Endothelial cell of umbilical vein (primary cell): ENCODE measurements at regions of chr4 and their contacts with region 1.

Region 1: DNA sequence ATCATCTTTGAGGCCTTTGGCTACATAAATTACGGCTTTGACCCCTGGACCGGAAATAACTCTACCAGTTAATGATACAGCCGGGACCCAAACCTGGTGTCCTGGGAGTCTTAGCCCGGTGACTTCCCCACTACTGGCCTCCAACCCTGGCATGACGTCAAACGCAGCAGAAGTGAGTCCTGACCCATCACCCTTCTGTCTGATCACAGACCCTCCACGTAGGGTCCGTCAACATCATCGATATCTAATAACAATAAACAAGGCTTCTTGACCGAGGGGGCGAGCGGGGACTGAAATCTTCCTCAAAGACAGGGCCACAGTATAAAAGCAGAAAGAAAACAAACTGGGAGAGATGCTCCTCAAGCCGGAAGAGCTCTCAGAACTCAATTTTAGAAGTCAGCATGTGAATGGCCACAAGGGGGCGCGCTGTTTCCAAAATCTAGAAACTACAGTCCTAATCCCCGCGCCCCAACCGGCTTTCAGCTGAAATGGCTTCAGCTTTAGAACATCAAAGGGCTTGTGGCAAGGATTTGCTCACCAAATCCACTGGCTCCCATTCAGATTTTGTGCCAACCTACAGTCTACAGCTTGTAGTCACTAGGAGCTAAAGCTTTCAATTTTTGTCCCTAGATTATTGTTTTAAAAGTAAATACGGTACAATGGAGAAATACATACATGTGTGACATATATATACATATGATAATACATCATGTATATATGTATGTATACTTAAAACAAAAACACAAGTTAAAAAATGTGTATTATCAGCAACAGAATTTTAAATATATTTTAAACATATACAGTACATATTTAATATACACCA is 46.4 kb upstream of the ENPP6 start:
- DNase-seq: peak; percentile 85
- H3K4me3 ChIP-seq: no peak overlapping the region
- H3K27ac ChIP-seq: no peak overlapping the region
- H3K4me1 ChIP-seq: peaks cover 23% of the 10 kb centered on the region
- H3K27me3 ChIP-seq: peaks cover 2 to 3% of the 10 kb centered on the region in 2 experiments
- CTCF ChIP-seq: peak; percentile 77 to 85
- POLR2A ChIP-seq: no peak

Region 2: DNA sequence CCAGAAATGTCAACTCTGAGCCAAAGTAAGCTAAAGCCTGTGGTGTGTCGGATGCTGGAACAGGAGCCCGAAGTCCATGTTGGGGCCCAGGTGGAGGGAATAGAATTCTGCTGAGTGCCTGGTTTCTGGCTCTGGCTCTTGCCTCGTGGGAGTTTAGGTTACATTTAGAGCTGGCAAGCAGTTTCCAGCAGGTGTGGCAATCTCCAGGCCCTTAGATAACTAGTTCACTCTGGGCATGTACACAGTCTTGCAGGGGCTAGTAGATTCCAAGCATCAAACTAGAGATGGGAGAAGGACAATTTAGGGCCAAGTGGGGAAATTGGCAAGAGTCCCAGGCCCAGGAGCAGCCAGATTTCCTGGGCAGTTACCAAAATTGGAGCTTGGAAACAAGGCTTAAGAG is 415.3 kb before region 1 on chr4:
- CTCF ChIA-PET with region 1: no interaction called
- POLR2A ChIA-PET with region 1: no interaction called
- dilution Hi-C with region 1: no loop called
- intact Hi-C with region 1: no loop called
- DNase-seq: no peak
- H3K4me3 ChIP-seq: no peak overlapping the region
- H3K27ac ChIP-seq: no peak overlapping the region
- H3K4me1 ChIP-seq: no peaks in the 10 kb centered on the region
- H3K27me3 ChIP-seq: peaks cover 2% of the 10 kb centered on the region in 2 experiments
- CTCF ChIP-seq: no peak
- POLR2A ChIP-seq: no peak

Region 3: DNA sequence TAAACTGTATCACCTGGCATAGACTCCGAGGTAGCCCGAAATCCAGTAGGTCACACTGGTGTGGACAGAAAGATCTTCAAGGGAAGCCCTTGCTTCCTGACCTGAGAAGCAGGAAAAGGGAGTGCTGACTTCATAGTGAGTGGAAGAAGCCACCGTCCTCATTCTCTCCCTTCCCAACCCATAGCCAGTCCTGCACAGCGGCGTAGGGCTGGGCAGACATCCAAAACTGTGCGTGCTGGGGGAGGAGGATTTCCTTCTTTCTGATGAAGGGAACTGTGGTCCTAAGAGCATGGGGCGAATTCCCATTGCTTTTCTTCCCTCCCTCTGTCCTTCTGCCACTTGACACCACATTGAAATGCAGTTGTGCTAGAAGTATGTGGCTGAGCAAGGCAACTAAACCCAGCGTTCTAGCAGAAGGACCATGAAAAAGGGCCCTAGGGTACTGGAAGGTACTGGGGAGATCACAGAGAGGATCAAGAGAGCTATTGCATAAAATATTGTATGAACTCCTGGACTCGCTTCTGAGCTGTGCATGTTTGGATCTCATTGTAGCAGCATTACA is 292.1 kb before region 1 on chr4:
- CTCF ChIA-PET with region 1: no interaction called
- POLR2A ChIA-PET with region 1: no interaction called
- dilution Hi-C with region 1: no loop called
- intact Hi-C with region 1: no loop called
- DNase-seq: no peak
- H3K4me3 ChIP-seq: no peak overlapping the region
- H3K27ac ChIP-seq: no peak overlapping the region
- H3K4me1 ChIP-seq: no peaks in the 10 kb centered on the region
- H3K27me3 ChIP-seq: no peaks in the 10 kb centered on the region
- CTCF ChIP-seq: no peak
- POLR2A ChIP-seq: no peak

Region 4: DNA sequence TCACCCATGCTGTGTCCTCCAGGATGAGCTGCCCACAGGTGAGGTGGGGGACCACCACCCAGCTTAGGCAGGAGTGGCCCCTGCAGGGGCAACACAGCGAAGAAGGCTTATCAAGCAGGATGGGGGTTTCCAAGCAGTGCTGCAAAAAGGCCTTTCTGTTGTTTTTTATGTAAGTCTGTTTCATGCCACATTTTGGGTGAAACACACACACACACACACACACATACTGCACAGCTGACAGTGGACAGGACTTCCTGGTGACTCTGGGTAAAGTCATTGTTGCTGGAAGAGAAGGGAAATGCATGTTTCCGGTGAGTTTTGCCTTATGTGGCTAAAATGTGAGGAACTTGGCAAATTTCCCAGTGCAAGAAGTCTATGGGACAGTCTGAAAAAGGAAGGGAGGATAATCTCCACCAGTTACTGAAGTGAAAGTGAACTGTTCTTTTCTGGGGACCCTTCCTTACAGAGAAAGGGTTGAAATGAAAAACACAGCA is 91.0 kb after region 1 on chr4:
- CTCF ChIA-PET with region 1: interaction called, 6 read pairs
- POLR2A ChIA-PET with region 1: no interaction called
- dilution Hi-C with region 1: no loop called
- intact Hi-C with region 1: loop called (anchors 1 kb)
- DNase-seq: peak; percentile 98
- H3K4me3 ChIP-seq: no peak overlapping the region
- H3K27ac ChIP-seq: peak overlapping the region; percentile 72
- H3K4me1 ChIP-seq: peaks cover 13% of the 10 kb centered on the region
- H3K27me3 ChIP-seq: no peaks in the 10 kb centered on the region
- CTCF ChIP-seq: no peak
- POLR2A ChIP-seq: peak; percentile 73

Region 5: GRCh38 chr4:184487513-184487912 is 223.4 kb after region 1 on chr4:
- CTCF ChIA-PET with region 1: no interaction called
- POLR2A ChIA-PET with region 1: no interaction called
- dilution Hi-C with region 1: no loop called
- intact Hi-C with region 1: no loop called
- DNase-seq: no peak
- H3K4me3 ChIP-seq: no peak overlapping the region
- H3K27ac ChIP-seq: no peak overlapping the region
- H3K4me1 ChIP-seq: no peaks in the 10 kb centered on the region
- H3K27me3 ChIP-seq: peaks cover 0 to 2% of the 10 kb centered on the region in 2 experiments
- CTCF ChIP-seq: no peak
- POLR2A ChIP-seq: no peak

Region 6: GRCh38 chr4:184538023-184538599 is 274.0 kb after region 1 on chr4:
- CTCF ChIA-PET with region 1: interaction called, 81 read pairs
- POLR2A ChIA-PET with region 1: interaction called, 5 read pairs
- dilution Hi-C with region 1: no loop called
- intact Hi-C with region 1: loop called (anchors 1 kb)
- DNase-seq: peak; percentile 92
- H3K4me3 ChIP-seq: peak overlapping the region; percentile 69 to 86 (median 71)
- H3K27ac ChIP-seq: peak overlapping the region; percentile 97
- H3K4me1 ChIP-seq: peaks cover 28% of the 10 kb centered on the region
- H3K27me3 ChIP-seq: no peaks in the 10 kb centered on the region
- CTCF ChIP-seq: peak; percentile 60 to 66
- POLR2A ChIP-seq: no peak

Region 7: DNA sequence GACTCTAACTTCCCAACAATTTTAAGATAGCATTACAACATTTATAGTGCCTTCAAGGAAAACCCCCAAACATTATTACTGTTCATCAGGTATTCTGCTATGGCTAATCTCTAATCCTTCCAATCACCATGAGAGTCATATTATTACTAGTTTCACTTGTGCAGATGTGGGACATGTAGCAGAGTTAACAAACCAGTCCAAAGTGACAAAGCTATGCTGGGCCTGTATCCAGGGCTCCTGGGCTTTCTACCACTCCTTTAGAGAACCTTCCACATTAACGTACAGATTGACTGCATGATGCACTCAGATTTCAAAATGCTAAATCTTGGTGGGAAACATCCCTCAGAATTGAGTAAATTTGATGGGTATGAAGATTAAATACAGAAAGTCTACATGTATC is 368.7 kb after region 1 on chr4:
- CTCF ChIA-PET with region 1: interaction called, 10 read pairs
- POLR2A ChIA-PET with region 1: no interaction called
- dilution Hi-C with region 1: no loop called
- intact Hi-C with region 1: no loop called
- DNase-seq: no peak
- H3K4me3 ChIP-seq: no peak overlapping the region
- H3K27ac ChIP-seq: no peak overlapping the region
- H3K4me1 ChIP-seq: no peaks in the 10 kb centered on the region
- H3K27me3 ChIP-seq: no peaks in the 10 kb centered on the region
- CTCF ChIP-seq: no peak
- POLR2A ChIP-seq: no peak

Region 8: GRCh38 chr4:184733654-184734524 is 469.8 kb after region 1 on chr4 and contains the start of gene CENPU:
- CTCF ChIA-PET with region 1: interaction called, 35 read pairs
- POLR2A ChIA-PET with region 1: no interaction called
- dilution Hi-C with region 1: no loop called
- intact Hi-C with region 1: loop called (anchors 1 kb)
- DNase-seq: peak; percentile 99
- H3K4me3 ChIP-seq: peak within 1 kb of the TSS; percentile 75 to 91 (median 88)
- H3K27ac ChIP-seq: peak within 1 kb of the TSS; percentile 72
- H3K4me1 ChIP-seq: peaks cover 16% of the 10 kb centered on the region
- H3K27me3 ChIP-seq: no peaks in the 10 kb centered on the region
- CTCF ChIP-seq: no peak
- POLR2A ChIP-seq: peak; percentile 68
- total RNA-seq, gene CENPU: 35.6 and 37.9 TPM in 2 replicates

Region 9: DNA sequence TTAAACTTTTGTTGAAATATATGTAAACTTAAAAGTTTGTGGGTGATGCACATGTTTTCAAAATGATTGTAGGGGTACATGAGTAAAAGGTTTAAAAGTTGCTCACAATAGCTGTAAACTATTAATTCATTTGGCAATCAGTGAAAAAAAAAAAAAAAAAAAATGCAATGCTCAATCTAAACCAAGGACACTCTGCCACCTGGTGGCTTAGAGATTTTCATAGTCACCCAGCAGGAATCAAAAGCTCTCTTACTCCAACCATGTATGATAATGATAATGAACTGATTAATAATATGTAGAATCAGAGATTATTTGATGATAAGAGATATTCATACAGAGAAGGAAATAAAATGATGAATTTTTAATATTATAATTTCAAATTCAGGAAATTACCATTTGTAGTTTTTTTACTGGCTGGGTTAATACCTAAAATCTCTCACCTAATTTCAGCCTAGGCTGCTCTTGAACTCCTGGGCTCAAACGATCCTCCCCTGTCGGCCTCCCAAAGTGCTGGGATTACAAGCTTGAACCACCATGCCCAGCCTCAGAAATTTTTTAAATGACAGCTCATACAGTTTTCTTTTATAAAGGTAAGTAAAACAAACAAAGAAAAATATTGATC is 832.0 kb after region 1 on chr4:
- CTCF ChIA-PET with region 1: interaction called, 20 read pairs
- POLR2A ChIA-PET with region 1: no interaction called
- dilution Hi-C with region 1: no loop called
- intact Hi-C with region 1: no loop called
- DNase-seq: peak; percentile 49
- H3K4me3 ChIP-seq: no peak overlapping the region
- H3K27ac ChIP-seq: no peak overlapping the region
- H3K4me1 ChIP-seq: no peaks in the 10 kb centered on the region
- H3K27me3 ChIP-seq: peaks cover 2 to 11% of the 10 kb centered on the region in 2 experiments
- CTCF ChIP-seq: peak; percentile 31 to 39
- POLR2A ChIP-seq: no peak